H1 (cell line): ENCODE measurements at regions of chr2 and their contacts with region 1.

Region 1: DNA sequence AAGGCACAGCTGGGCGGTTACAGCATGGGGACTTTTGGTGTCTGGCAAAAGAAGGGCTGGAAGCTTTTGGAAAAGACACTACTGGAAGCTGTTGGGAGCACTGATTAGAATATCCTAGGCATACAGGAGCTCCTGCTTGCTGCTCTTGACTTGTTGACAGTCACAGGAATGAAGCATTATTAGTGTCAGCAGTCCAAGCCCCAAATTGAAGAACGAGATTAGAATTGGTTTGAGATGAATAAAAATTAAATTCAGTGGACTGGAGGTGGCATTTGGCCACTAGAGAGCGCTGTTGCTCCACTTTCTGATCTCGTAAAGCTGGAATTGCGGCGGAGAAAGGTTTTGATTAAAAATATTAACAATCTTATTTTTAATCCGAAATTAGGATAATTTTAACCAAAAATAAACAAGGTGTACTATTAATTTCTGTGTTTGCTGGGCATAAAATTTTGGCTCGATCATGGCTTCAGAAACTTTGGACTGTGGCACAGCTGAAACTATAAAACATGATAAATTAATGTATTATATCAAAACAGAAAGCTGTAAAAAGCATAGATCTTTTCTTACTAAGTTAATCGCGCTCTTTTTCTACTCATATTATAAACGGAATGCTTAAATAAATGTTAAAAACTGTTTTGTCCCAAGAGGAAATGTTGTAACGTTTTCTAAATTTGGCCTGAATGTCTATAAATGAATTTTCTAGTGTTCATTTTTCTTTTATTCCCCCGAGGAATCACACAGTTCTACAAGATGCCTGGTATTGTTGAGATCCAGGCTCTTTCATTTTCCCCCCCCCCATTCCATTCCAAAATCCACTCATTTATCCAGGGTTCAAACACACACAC is 2.4 kb upstream of the HOXD8 start:
- DNase-seq: peak in 1 of 2 experiments; percentile 83
- H3K4me3 ChIP-seq: no peak overlapping the region
- H3K27ac ChIP-seq: no peak overlapping the region
- H3K4me1 ChIP-seq: peaks cover 0 to 14% (median 9%) of the 10 kb centered on the region in 4 experiments; a peak in 6 of 7 replicates
- H3K27me3 ChIP-seq: peaks cover 94 to 100% (median 98%) of the 10 kb centered on the region in 4 experiments
- CTCF ChIP-seq: peak; percentile 31 to 74 (median 68)
- EP300 ChIP-seq: no peak
- POLR2A ChIP-seq: no peak
- RAD21 ChIP-seq: peak; percentile 85 to 86

Region 2: GRCh38 chr2:176104325-176105077 is 22.6 kb before region 1 on chr2:
- CTCF ChIA-PET with region 1: interaction called, 42 read pairs
- POLR2A ChIA-PET with region 1: no interaction called
- DNase-seq: no peak
- H3K4me3 ChIP-seq: peak overlapping the region in 1 of 4 experiments; percentile 50; a peak in 2 of 8 replicates
- H3K27ac ChIP-seq: no peak overlapping the region
- H3K4me1 ChIP-seq: peaks cover 0 to 27% (median 14%) of the 10 kb centered on the region in 4 experiments; a peak in 6 of 7 replicates
- H3K27me3 ChIP-seq: peaks cover 98 to 99% (median 99%) of the 10 kb centered on the region in 4 experiments
- CTCF ChIP-seq: no peak
- EP300 ChIP-seq: no peak
- POLR2A ChIP-seq: no peak
- RAD21 ChIP-seq: no peak

Region 3: DNA sequence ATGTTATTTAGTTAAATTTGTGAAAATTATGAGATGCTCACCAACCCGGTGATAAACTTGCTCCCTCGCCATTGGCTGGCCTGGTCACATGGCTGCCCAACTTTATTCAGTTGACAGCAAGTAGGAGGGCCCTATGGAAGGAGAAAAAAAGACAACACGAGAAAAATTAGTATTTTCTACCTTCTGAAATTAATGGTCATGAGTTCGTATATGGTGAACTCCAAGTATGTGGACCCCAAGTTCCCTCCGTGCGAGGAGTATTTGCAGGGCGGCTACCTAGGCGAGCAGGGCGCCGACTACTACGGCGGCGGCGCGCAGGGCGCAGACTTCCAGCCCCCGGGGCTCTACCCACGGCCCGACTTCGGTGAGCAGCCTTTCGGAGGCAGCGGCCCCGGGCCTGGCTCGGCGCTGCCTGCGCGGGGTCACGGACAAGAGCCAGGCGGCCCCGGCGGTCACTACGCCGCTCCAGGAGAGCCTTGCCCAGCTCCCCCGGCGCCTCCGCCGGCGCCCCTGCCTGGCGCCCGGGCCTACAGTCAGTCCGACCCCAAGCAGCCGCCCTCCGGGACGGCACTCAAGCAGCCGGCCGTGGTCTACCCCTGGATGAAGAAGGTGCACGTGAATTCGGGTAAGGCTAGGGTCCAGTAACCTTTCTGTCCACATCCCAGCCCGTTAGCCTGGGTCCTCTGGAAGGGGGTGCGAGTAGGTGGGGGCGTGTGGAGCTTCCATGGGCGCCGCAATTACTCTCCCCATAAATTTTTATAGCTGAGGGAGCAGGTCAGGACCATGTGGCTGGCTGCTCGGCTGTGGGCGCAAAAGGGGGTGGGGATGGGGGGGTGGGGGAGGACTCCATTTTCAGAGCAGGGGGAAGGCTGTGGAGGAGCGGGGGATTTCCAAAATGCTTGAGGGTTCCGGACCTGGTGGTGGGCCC is 24.6 kb after region 1 on chr2 and contains the start of gene HOXD4:
- CTCF ChIA-PET with region 1: interaction called, 11 read pairs
- POLR2A ChIA-PET with region 1: interaction called, 3 read pairs
- DNase-seq: peak in 1 of 2 experiments; percentile 60
- H3K4me3 ChIP-seq: peak within 1 kb of the TSS in 1 of 4 experiments; percentile 45; a peak in 2 of 8 replicates
- H3K27ac ChIP-seq: no peak within 1 kb of the TSS
- H3K4me1 ChIP-seq: peaks cover 0 to 10% (median 2%) of the 10 kb centered on the region in 4 experiments; a peak in 4 of 7 replicates
- H3K27me3 ChIP-seq: peaks cover 97 to 100% (median 100%) of the 10 kb centered on the region in 4 experiments
- CTCF ChIP-seq: no peak
- EP300 ChIP-seq: no peak
- POLR2A ChIP-seq: no peak
- RAD21 ChIP-seq: no peak
- total RNA-seq, gene HOXD4: not detected in 2 replicates

Region 4: GRCh38 chr2:176178038-176178756 is 51.0 kb after region 1 on chr2:
- CTCF ChIA-PET with region 1: interaction called, 30 read pairs
- POLR2A ChIA-PET with region 1: no interaction called
- DNase-seq: peak in 1 of 2 experiments; percentile 74
- H3K4me3 ChIP-seq: peak overlapping the region; percentile 24 to 56 (median 34); a peak in 6 of 8 replicates
- H3K27ac ChIP-seq: no peak overlapping the region
- H3K4me1 ChIP-seq: peaks cover 3 to 17% (median 7%) of the 10 kb centered on the region in 4 experiments
- H3K27me3 ChIP-seq: peaks cover 92 to 99% (median 97%) of the 10 kb centered on the region in 4 experiments
- CTCF ChIP-seq: no peak
- EP300 ChIP-seq: no peak
- POLR2A ChIP-seq: no peak
- RAD21 ChIP-seq: 0 out of 4 replicates have a peak, but pooled peaks of 1 of the 2 experiments have one; percentile 4

Region 5: DNA sequence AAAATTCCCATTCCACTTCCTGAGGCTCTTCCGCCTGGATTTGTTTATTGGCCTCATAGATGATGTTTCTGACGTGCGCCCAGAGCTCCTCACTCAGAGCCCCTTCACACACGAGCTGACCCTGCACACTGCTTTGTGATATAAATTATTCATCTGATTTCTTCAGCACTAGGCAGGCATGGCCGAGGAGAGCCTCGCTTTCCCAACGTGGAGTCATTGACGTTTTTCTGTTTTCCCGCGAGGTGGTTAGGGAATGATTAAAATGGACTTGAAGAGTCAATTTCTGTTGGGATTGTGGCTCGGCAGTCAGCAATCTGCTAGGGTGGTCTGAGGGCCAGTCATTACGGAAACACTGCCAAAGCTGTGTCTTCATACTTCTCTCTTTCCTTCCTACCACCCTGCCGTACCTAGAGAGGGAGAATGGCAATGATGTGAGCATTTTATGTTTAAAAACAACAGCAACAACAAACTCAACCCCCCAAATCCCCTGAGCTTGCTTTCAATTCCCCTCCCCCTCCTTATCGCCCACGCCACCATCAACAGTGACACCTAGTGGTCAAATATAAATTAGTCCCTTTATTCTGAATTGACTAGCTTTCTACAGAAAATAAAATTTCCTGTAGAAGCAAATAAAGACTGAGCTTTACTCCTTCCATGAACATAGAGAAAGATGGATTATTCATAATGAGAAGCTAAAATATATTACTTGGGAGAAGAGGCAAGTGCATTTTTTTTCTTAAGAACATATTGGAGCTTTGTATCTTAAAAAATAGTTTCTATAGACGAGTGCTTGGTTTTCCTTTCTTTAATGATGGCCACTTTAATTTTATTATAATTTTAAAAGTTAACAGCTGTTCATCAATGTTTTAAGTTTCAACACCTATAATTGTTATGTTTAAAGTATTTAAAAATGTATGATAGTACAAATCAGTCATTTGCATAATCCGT is 427.2 kb after region 1 on chr2:
- CTCF ChIA-PET with region 1: interaction called, 20 read pairs
- POLR2A ChIA-PET with region 1: no interaction called
- DNase-seq: peak in 1 of 2 experiments; percentile 55
- H3K4me3 ChIP-seq: peak overlapping the region in 3 of 4 experiments; percentile 20 to 51 (median 43); a peak in 5 of 8 replicates
- H3K27ac ChIP-seq: no peak overlapping the region
- H3K4me1 ChIP-seq: no peaks in the 10 kb centered on the region; a peak in 2 of 7 replicates
- H3K27me3 ChIP-seq: peaks cover 0 to 11% (median 8%) of the 10 kb centered on the region in 4 experiments; a peak in 6 of 7 replicates
- CTCF ChIP-seq: peak; percentile 13 to 64 (median 62)
- EP300 ChIP-seq: no peak
- POLR2A ChIP-seq: no peak
- RAD21 ChIP-seq: peak; percentile 75 to 84